ENCODE measurements at regions of chr9 and their contacts with region 1.

Region 1: DNA sequence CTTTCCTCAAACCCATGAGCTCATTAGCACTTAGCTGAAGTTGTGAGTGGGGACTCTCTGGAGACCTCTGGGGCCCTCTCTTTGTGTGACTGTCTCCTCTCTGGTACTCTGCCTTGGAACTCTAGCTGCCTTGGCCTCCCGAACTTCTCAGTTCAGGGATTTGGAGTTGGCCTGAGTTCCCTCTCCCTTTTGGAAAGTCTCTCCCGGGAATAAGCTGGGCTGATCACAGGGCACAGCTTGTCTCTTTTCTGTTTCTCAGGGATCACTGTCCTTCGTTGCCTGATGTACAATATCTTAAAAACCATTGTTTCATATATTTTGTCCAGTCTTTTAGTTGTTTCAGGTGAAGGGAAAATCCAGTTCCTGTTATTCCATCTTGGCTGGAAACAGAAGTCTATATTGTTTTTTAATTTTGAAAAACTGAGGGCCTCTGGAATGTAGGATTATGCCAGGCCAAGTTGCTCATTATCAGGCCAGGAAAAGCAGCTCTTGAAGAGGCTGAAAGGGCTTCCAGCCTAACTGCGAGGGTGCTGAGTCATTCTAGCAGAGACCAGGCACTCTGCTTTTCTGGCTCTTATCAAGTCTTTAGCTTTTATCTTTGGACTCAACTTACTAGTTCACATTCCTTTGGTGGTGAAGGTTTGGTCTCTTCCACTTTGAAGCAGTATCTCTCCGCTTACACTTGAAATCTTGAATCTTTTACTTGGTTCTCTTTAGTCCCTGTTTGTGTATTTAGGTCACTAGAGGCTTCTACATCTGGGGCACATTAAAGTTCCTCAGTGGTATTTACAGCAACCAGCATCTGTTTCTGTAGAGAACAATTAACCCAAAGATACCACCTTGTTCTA is 8.4 kb upstream of the RGS3 start:
- DNase-seq: peak; percentile 97
- H3K4me3 ChIP-seq: no peak overlapping the region
- H3K27ac ChIP-seq: peak overlapping the region; percentile 94
- H3K4me1 ChIP-seq: peaks cover 22% of the 10 kb centered on the region
- H3K27me3 ChIP-seq: no peaks in the 10 kb centered on the region
- CTCF ChIP-seq: no peak
- POLR2A ChIP-seq: no peak

Region 2: GRCh38 chr9:113484258-113484730 is 29.2 kb after region 1 on chr9:
- CTCF ChIA-PET with region 1: interaction called, 20 read pairs
- POLR2A ChIA-PET with region 1: interaction called, 18 read pairs
- dilution Hi-C with region 1: no loop called
- intact Hi-C with region 1: loop called (anchors 1 kb)
- DNase-seq: peak; percentile 99
- H3K4me3 ChIP-seq: no peak overlapping the region
- H3K27ac ChIP-seq: peak overlapping the region; percentile 31
- H3K4me1 ChIP-seq: peaks cover 23% of the 10 kb centered on the region
- H3K27me3 ChIP-seq: no peaks in the 10 kb centered on the region
- CTCF ChIP-seq: no peak
- POLR2A ChIP-seq: peak; percentile 37

Region 3: GRCh38 chr9:113492343-113493212 is 37.4 kb after region 1 on chr9:
- CTCF ChIA-PET with region 1: interaction called, 14 read pairs
- POLR2A ChIA-PET with region 1: interaction called, 4 read pairs
- dilution Hi-C with region 1: no loop called
- intact Hi-C with region 1: no loop called
- DNase-seq: peak; percentile 89
- H3K4me3 ChIP-seq: no peak overlapping the region
- H3K27ac ChIP-seq: no peak overlapping the region
- H3K4me1 ChIP-seq: peaks cover 8% of the 10 kb centered on the region
- H3K27me3 ChIP-seq: no peaks in the 10 kb centered on the region
- CTCF ChIP-seq: no peak
- POLR2A ChIP-seq: no peak

Region 4: DNA sequence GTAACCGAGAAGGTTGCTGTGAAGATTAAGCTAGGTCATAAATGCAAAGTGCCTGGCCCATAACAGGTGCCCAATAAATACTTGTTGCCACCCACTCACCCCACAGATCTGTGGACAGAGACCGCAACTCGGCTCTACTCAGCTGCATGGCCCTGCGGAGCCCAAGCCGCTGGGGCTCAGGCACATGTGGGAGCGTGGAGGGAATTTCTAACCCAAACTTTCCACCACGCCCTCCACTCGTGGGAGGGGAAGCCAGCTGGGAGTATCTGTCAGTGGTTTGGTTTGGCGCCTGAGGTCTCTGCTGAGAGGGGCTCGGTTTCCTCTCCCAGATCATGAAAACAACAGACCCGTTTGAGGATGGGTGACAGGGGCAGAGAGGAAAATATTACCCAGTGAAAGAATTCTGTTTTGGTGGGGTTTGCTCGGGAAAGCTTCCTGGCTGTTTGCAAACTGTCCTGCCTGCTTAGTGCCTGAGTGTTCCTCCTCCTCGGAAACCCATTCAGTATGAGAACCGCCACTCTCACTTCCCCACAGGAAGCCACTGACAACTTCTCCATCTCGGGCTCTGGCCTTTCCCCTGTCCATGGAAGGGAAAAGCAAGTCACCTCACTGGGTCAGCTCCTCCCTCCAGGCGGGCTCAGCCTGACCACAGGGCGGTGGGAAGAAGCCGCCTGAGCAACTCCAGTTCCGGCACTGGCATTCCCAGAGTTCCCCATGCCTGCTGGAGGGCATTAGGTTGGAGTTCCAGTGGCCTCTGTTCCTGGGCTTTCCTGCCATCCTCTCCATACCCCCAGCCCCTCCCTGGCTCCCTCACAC is 68.5 kb after region 1 on chr9:
- CTCF ChIA-PET with region 1: interaction called, 3 read pairs
- POLR2A ChIA-PET with region 1: interaction called, 6 read pairs
- dilution Hi-C with region 1: no loop called
- intact Hi-C with region 1: loop called (anchors 1 kb)
- DNase-seq: peak; percentile 85
- H3K4me3 ChIP-seq: no peak overlapping the region
- H3K27ac ChIP-seq: peak overlapping the region; percentile 80
- H3K4me1 ChIP-seq: peaks cover 65% of the 10 kb centered on the region
- H3K27me3 ChIP-seq: no peaks in the 10 kb centered on the region
- CTCF ChIP-seq: no peak
- POLR2A ChIP-seq: peak; percentile 21

Region 5: GRCh38 chr9:113548221-113549041 is 93.3 kb after region 1 on chr9:
- CTCF ChIA-PET with region 1: no interaction called
- POLR2A ChIA-PET with region 1: no interaction called
- dilution Hi-C with region 1: no loop called
- intact Hi-C with region 1: no loop called
- DNase-seq: peak; percentile 60
- H3K4me3 ChIP-seq: no peak overlapping the region
- H3K27ac ChIP-seq: peak overlapping the region; percentile 19
- H3K4me1 ChIP-seq: peaks cover 30% of the 10 kb centered on the region
- H3K27me3 ChIP-seq: no peaks in the 10 kb centered on the region
- CTCF ChIP-seq: no peak
- POLR2A ChIP-seq: no peak

Region 6: DNA sequence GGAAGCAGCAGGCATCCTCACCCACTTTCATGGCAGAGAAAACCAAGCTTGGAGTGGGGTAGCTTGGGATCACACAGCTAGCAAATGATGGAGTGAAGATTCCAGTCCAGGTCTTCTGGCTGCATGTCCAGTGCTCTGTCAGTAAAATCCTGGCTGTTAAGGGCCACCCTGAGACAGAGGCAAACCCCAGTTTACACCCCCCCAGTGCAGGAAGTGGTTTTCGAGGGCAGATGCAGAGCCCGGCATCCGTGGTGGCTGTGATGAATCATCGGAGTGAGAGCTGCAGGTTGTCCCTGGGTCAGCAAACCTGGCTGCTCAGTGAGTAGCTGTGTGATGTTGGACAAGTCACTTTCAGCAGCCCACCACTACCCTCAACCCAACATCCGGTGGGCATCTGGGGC is 123.7 kb after region 1 on chr9:
- CTCF ChIA-PET with region 1: interaction called, 11 read pairs
- POLR2A ChIA-PET with region 1: no interaction called
- dilution Hi-C with region 1: no loop called
- intact Hi-C with region 1: no loop called
- DNase-seq: peak; percentile 49
- H3K4me3 ChIP-seq: no peak overlapping the region
- H3K27ac ChIP-seq: peak overlapping the region; percentile 39
- H3K4me1 ChIP-seq: peaks cover 48% of the 10 kb centered on the region
- H3K27me3 ChIP-seq: no peaks in the 10 kb centered on the region
- CTCF ChIP-seq: no peak
- POLR2A ChIP-seq: no peak

Measured in endothelial cell of umbilical vein (primary cell).